ENCODE measurements at regions of chr10 and their contacts with region 1.

Region 1: GRCh38 chr10:22620140-22620857 is 94.1 kb downstream of the PIP4K2A start:
- DNase-seq: peak; percentile 86
- ATAC-seq: peak; percentile 73

Region 2: DNA sequence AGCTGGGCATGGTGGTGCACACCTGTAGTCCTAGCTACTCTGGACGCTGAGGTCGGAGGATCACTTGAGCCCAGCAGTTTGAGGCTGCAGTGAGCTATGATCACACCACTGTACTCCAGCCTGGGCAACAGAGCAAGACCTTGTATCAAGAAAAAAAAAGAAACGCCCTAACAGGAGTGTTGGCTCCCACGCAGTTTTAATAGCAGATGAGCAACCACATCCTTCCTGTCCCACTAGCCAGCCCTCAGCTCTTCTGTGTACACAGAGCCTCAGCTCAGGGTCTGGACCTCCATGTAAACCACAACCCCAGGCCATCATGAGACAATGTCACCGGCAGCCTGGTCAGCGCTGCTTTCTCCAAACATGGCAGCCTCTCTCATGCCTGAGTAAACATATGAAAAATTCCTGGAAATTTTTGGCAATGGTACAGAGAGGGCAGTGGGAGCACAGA is 14.1 kb before region 1 on chr10:
- intact Hi-C with region 1: no loop called
- DNase-seq: no peak
- ATAC-seq: peak; percentile 67

Region 3: GRCh38 chr10:22655311-22655981 is 35.1 kb after region 1 on chr10:
- intact Hi-C with region 1: loop called (anchors 5 kb)
- DNase-seq: no peak
- ATAC-seq: no peak

Region 4: DNA sequence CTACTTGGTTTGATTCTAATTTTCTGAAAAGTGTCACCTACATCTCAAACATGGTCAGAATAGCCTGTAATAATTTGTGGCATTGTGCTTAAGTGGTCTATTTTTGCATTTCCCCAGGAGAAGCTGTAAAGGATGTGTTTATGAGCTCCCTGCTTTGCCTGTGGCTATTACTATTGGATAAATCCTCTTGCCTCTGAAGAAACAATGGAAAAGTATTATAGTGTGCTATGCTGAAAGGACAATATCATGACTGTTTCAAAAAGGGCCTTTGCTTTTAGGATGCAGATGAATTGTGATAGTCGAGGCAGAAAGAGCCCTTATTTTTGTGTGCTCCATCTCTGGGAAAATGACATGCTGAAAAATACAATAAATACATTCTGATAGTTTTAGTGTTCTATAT is 213.5 kb after region 1 on chr10:
- intact Hi-C with region 1: no loop called
- DNase-seq: no peak
- ATAC-seq: no peak

Region 5: GRCh38 chr10:22854935-22855421 is 234.7 kb after region 1 on chr10:
- intact Hi-C with region 1: loop called (anchors 10 kb)
- DNase-seq: no peak
- ATAC-seq: peak; percentile 86

Measured in Right ventricle myocardium inferior (tissue), 1 donor.